CD4-positive, alpha-beta T cell (primary cell): ENCODE measurements at regions of chr11 and their contacts with region 1.

Region 1: GRCh38 chr11:107908306-107908705 is 19.9 kb upstream of the RAB39A start:
- DNase-seq: no peak
- ATAC-seq: no peak
- H3K4me3 ChIP-seq: no peak overlapping the region
- H3K4me3 Mint-ChIP-seq: no peak overlapping the region
- H3K27ac ChIP-seq: no peak overlapping the region
- H3K27ac Mint-ChIP-seq: no peak overlapping the region
- H3K4me1 ChIP-seq: no peaks in the 10 kb centered on the region
- H3K4me1 Mint-ChIP-seq: no peaks in the 10 kb centered on the region
- H3K27me3 ChIP-seq: peaks cover 0 to 3% of the 10 kb centered on the region in 2 experiments
- H3K27me3 Mint-ChIP-seq: peaks cover 25% of the 10 kb centered on the region
- CTCF ChIP-seq: no peak

Region 2: GRCh38 chr11:107741044-107741823 is 167.1 kb before region 1 on chr11:
- CTCF ChIA-PET with region 1: no interaction called
- POLR2A ChIA-PET with region 1: no interaction called
- intact Hi-C with region 1: loop called in 1 of 2 experiments (anchors 5 kb)
- DNase-seq: peak in 2 of 14 experiments; percentile 11 to 19
- ATAC-seq: no peak
- H3K4me3 ChIP-seq: no peak overlapping the region
- H3K4me3 Mint-ChIP-seq: no peak overlapping the region
- H3K27ac ChIP-seq: no peak overlapping the region
- H3K27ac Mint-ChIP-seq: no peak overlapping the region
- H3K4me1 ChIP-seq: no peaks in the 10 kb centered on the region
- H3K4me1 Mint-ChIP-seq: no peaks in the 10 kb centered on the region
- H3K27me3 ChIP-seq: peaks cover 4 to 17% of the 10 kb centered on the region in 2 experiments
- H3K27me3 Mint-ChIP-seq: peaks cover 43% of the 10 kb centered on the region
- CTCF ChIP-seq: no peak

Region 3: DNA sequence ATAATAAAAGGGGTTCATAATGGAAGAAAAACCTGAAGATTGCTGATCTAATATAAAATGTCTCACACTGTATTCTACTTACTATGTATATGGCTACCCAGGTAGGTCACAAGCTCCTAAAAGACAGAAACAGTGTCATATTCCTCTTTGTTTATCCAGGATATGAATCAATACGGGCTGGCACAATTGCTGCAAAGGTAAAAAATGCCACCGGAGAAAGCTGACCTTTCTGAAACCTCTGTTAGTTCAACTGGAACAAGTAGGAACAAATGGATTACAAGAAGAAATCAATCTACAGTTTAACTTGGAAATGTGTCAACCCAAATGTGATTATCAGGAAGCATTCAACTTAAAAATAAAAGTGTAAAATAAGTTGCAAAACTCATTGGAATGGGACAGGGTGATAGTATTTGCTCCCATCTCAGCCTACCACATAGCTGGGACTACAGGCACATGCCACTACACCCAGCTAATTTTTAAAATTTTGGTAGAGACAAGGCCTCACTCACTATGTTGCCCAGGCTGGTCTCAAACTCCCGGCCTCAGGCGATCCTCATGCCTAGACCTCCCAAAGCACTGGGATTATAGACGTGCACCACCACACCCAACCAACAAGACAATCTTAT is 77.3 kb before region 1 on chr11:
- CTCF ChIA-PET with region 1: no interaction called
- POLR2A ChIA-PET with region 1: no interaction called
- intact Hi-C with region 1: no loop called
- DNase-seq: no peak
- ATAC-seq: no peak
- H3K4me3 ChIP-seq: no peak overlapping the region
- H3K4me3 Mint-ChIP-seq: no peak overlapping the region
- H3K27ac ChIP-seq: no peak overlapping the region
- H3K27ac Mint-ChIP-seq: no peak overlapping the region
- H3K4me1 ChIP-seq: no peaks in the 10 kb centered on the region
- H3K4me1 Mint-ChIP-seq: no peaks in the 10 kb centered on the region
- H3K27me3 ChIP-seq: no peaks in the 10 kb centered on the region
- H3K27me3 Mint-ChIP-seq: no peaks in the 10 kb centered on the region
- CTCF ChIP-seq: no peak

Region 4: DNA sequence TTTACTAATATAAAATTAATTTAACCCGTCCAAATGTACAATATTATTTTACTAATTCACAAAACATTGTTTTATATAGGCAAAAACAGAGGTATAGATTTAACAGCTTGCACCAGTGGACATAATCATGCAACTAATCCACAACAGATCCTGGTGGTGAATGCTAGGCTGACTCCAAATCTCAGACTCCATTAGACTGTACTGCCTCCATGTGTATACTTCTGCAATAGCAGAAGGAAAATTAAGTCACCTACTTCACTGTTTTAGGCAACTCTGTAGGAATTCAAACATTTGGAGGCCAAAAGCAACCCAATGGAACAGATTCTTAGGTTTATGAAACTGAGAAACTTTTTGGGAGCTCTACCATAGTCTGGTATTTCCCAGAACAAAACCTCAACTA is 10.0 kb before region 1 on chr11:
- CTCF ChIA-PET with region 1: no interaction called
- POLR2A ChIA-PET with region 1: no interaction called
- intact Hi-C with region 1: no loop called
- DNase-seq: peak in 3 of 14 experiments; percentile 35 to 47 (median 36)
- ATAC-seq: peak; percentile 61
- H3K4me3 ChIP-seq: no peak overlapping the region
- H3K4me3 Mint-ChIP-seq: no peak overlapping the region
- H3K27ac ChIP-seq: no peak overlapping the region
- H3K27ac Mint-ChIP-seq: no peak overlapping the region
- H3K4me1 ChIP-seq: no peaks in the 10 kb centered on the region
- H3K4me1 Mint-ChIP-seq: no peaks in the 10 kb centered on the region
- H3K27me3 ChIP-seq: no peaks in the 10 kb centered on the region
- H3K27me3 Mint-ChIP-seq: peaks cover 4% of the 10 kb centered on the region
- CTCF ChIP-seq: peak; percentile 66